Right ventricle myocardium inferior (tissue), 1 donor: ENCODE measurements at regions of chr21 and their contacts with region 1.

Region 1: GRCh38 chr21:41167348-41168342 is at the start of gene BACE2:
- DNase-seq: peak; percentile 90
- ATAC-seq: peak; percentile 89
- total RNA-seq, gene BACE2: 14.5 TPM

Region 2: GRCh38 chr21:41207401-41208068 is 39.9 kb after region 1 on chr21:
- intact Hi-C with region 1: loop called (anchors 5 kb)
- DNase-seq: peak; percentile 84
- ATAC-seq: peak; percentile 88

Region 3: DNA sequence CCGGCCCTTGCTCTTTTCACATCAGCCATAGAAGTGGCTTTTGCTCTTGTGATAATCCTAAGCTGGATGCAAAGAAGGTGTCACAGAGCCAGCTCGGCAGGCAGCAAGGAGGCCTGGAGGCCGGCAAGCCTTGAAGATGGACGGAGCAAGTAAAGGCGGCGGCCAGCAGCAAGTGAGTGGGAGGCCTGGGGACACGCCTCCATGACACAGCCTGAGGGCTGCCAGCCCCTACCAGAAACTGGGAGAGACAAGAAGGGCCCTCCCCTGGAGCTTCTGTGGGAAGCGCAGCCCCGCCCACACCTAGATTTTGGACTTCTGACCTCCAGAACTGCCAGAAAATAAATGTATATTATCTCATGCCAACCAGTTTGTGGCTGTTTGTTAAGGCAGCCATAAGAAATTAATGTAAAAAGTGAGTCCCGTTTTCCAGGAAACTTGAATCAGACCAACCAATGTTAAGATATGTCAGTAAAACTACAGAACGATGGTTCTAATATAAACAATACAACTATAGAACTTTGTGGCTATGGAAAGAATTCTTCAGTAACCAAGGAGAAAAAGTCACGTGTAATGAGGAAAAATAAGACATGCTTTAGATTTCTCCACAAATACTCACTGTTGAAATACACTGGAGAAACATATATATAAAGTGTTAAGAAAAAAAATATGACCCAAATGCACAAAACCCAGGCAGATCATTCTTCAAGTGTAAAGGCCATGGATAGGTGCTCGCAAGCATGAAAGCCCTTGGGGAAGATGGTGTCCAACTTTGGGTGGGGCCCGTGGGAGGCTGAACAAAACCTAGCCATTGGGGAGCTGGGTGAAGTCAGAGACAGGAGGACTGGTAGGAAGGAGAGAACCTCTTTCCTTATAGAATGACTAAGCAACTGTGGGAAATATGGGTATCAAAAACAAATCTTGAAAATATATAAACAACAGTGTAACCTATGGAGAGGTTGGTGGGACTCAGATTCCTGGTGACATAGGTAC is 50.3 kb after region 1 on chr21:
- intact Hi-C with region 1: loop called (anchors 2 kb)
- DNase-seq: peak; percentile 82
- ATAC-seq: peak; percentile 88